Common myeloid progenitor, CD34-positive (primary cell): ENCODE measurements at regions of chr2 and their contacts with region 1.

Region 1: GRCh38 chr2:27264753-27265535 is 2.1 kb upstream of the SLC30A3 start:
- DNase-seq: peak; percentile 73 to 80 (median 77)
- H3K4me3 ChIP-seq: peak overlapping the region; percentile 3 to 76 (median 58)
- H3K27ac ChIP-seq: no peak overlapping the region
- H3K4me1 ChIP-seq: peaks cover 0 to 37% (median 36%) of the 10 kb centered on the region in 4 experiments
- H3K27me3 ChIP-seq: peaks cover 10 to 72% (median 48%) of the 10 kb centered on the region in 5 experiments

Region 2: DNA sequence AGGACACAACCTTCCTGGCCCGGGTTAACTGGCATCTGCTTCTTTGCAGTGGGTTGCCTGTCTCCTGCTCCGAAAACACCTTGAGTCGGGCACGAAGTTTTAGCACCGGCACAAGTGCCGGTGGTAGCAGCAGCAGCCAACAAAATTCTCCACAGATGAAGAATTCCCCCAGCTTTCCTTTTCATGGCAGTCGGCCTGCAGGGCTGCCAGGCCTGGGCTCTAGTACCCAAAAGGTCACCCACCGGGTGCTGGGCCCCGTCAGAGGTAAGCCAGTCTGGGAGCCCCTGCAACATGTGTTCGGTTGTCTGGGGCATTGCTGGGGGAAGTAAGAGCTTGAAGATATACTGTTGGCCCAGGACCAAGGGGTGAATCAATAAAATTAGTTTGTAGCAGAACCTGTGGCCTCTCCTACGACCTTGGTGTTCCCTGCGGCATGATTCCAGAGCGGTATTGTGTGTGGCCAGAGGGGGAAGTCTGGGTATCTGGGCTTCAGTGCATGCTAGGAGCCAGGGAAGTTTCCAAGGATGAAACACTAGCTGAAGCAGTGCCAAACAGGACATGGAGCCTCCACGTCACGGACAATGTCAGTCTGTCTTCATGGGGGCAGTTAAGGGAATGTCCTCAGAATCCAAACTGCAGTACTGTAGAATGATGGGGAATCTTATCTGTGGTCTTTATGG is 205.7 kb before region 1 on chr2:
- CTCF ChIA-PET with region 1: no interaction called
- POLR2A ChIA-PET with region 1: no interaction called
- DNase-seq: no peak
- H3K4me3 ChIP-seq: no peak overlapping the region
- H3K27ac ChIP-seq: no peak overlapping the region
- H3K4me1 ChIP-seq: no peaks in the 10 kb centered on the region
- H3K27me3 ChIP-seq: no peaks in the 10 kb centered on the region

Region 3: DNA sequence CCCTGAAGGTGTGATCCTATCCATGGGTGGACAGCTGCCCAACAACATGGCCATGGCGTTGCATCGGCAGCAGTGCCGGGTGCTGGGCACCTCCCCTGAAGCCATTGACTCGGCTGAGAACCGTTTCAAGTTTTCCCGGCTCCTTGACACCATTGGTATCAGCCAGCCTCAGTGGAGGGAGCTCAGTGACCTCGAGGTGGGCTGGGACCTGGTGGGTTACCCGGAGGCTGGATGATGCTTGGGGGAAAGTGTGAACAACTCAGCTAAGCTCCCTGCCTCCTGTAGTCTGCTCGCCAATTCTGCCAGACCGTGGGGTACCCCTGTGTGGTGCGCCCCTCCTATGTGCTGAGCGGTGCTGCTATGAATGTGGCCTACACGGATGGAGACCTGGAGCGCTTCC is 31.6 kb before region 1 on chr2:
- CTCF ChIA-PET with region 1: interaction called, 10 read pairs
- POLR2A ChIA-PET with region 1: no interaction called
- DNase-seq: no peak
- H3K4me3 ChIP-seq: no peak overlapping the region
- H3K27ac ChIP-seq: no peak overlapping the region
- H3K4me1 ChIP-seq: no peaks in the 10 kb centered on the region
- H3K27me3 ChIP-seq: no peaks in the 10 kb centered on the region

Region 4: GRCh38 chr2:27249891-27250651 is 14.9 kb before region 1 on chr2:
- CTCF ChIA-PET with region 1: interaction called, 14 read pairs
- POLR2A ChIA-PET with region 1: interaction called, 3 read pairs
- DNase-seq: peak; percentile 54 to 74 (median 70)
- H3K4me3 ChIP-seq: peak overlapping the region in 3 of 7 experiments; percentile 11 to 22 (median 13)
- H3K27ac ChIP-seq: no peak overlapping the region
- H3K4me1 ChIP-seq: peaks cover 0 to 7% (median 1%) of the 10 kb centered on the region in 4 experiments
- H3K27me3 ChIP-seq: peaks cover 0 to 8% (median 0%) of the 10 kb centered on the region in 5 experiments

Region 5: GRCh38 chr2:27281855-27282559 is 17.1 kb after region 1 on chr2 and contains the start of gene TRIM54:
- CTCF ChIA-PET with region 1: interaction called, 119 read pairs
- POLR2A ChIA-PET with region 1: interaction called, 6 read pairs
- DNase-seq: no peak
- H3K4me3 ChIP-seq: no peak within 1 kb of the TSS
- H3K27ac ChIP-seq: no peak within 1 kb of the TSS
- H3K4me1 ChIP-seq: no peaks in the 10 kb centered on the region
- H3K27me3 ChIP-seq: peaks cover 0 to 5% (median 0%) of the 10 kb centered on the region in 5 experiments

Region 6: DNA sequence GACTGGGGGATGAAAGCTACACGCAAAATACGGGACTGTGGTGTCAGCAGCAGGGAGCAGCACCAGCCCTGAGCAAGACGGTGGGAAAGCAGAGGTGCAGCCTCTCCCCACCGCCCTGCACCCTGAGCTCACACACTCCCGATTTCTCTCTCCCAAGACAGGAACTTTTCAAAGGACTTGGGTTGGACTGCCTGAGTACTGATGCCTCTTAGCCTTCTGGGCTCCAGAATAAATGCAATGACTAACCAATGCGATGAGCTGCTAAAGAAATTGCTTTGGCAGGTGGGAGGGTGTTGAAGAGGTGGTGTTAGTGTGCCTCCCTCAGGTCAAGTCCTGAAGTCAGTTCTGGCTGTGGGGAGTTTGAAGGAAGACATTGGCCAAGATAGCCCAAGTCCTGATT is 26.9 kb after region 1 on chr2:
- CTCF ChIA-PET with region 1: interaction called, 48 read pairs
- POLR2A ChIA-PET with region 1: no interaction called
- DNase-seq: peak in 2 of 3 donors; percentile 29 to 30
- H3K4me3 ChIP-seq: no peak overlapping the region
- H3K27ac ChIP-seq: no peak overlapping the region
- H3K4me1 ChIP-seq: peaks cover 7 to 29% (median 21%) of the 10 kb centered on the region in 4 experiments
- H3K27me3 ChIP-seq: no peaks in the 10 kb centered on the region